Lower leg skin (tissue), 4 donors: ENCODE measurements at regions of chr1 and their contacts with region 1.

Region 1: DNA sequence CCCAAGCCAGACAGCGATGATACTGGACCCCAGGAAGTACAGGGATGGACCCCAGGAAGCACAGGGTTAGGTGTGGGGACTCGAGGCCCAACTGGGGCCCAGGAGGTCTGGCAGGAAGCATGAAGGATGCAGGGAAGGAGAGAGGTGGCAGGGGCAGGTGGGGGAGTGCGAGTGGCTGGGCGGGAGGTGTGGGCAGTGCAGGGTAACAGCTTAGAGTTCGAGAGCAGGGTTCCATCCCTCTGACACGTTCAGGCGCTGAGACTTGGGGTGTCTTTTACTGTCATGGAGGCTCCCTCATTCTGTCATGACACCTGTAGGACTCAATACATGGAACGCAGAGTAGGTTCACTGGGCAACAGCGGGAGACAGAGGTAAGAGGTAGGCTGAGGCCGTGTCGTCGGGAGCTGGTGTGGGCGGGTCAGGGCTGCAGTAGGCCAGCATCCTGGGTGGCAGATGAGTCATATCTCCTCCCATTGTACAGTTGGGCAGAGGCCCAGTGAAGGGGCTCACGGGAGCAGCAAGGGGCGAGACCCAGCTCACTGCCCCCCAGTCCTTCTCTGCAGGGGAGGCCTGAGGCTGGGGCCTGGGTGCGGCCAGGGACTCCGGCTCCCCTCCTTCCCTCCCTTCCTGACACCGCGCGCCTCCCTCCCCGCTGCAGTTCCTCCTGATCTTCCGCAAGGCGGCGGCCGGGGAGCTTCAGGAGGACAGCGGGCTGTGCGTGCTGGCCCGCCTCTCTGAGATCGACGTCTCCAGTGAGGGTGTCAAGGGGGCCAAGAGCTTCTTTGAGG is 11.6 kb upstream of the CTRC start:
- DNase-seq: no peak
- H3K4me3 ChIP-seq: no peak overlapping the region
- CTCF ChIP-seq: no peak
- POLR2A ChIP-seq: no peak

Region 2: GRCh38 chr1:15128520-15129313 is 298.0 kb before region 1 on chr1:
- intact Hi-C with region 1: loop called (anchors 10 kb)
- DNase-seq: peak; percentile 53 to 92
- H3K4me3 ChIP-seq: no peak overlapping the region
- CTCF ChIP-seq: peak in 1 of 3 donors; percentile 47
- POLR2A ChIP-seq: no peak

Region 3: DNA sequence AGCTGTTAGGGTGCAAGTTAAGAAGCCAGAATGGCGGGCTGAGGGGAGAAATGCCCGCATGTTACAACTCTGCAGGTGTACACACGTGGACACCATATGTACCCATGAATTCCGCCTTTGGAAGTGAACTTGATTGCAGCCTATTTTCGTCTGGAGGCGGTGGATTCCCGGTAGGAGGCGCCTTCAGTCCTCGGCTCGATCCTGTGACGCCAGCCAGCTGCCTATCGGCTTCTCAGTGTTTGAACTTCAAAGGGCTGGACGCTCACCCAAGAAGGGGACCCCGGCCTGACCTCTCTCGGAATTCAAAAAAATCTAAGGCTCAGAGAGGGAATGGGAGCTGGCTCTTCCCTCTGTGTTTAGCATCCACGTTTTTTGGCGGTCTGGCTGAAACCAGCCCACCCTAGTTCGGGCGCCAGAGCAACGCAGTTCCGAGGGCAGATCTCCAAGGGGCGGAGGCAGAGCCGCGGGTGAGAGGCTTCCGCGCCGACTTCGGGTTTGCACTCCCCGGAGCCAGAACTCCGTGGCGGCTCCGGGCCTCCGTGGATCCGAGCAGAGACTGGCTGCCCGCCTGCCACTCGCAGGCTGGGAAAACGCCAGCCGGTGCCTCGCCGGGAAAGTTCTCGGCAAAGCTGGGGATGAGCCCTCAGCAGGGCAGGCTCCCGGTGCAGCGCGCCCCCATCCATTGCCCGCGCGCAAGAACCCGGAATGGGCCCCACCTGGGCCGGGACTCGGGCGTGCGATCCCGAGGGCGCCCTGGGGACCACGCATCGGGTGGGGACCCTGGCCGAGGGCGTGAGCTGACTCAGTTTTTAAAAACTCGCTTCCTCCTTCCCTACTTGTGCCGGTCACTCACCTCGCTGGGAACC is 274.1 kb before region 1 on chr1:
- intact Hi-C with region 1: no loop called
- DNase-seq: peak; percentile 70 to 96
- H3K4me3 ChIP-seq: peak overlapping the region; percentile 36
- CTCF ChIP-seq: peak in 1 of 3 donors; percentile 26
- POLR2A ChIP-seq: no peak

Region 4: DNA sequence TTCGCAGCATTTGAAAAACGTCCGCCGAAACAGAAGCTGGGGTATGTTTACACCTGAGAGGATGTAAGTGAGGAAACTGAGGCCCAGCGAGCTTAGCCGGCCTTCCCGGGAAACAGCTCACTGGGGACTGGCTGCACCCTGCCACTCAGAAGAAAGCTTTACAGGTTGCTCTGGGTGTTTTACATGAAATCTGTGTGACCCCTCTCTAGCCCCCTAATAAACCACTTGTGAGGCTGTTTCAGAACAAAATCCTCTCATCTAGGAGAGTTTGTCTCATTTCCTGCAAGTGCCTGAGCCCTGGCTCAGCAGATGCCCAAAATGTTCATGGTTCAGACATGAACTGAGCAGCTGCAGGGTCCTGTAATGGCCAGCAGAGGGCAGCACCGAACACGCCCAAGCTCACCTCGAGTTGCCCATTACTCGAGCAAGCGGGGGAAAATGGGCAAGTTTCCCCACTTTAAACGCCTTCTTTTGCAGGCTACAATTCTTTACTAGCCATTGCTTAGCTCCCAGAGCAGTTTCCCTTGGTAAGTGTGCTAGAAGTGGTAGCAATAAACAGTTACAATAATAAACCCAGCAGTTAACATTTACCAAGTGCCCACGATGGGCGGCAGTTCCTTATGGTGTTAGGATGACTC is 103.2 kb before region 1 on chr1:
- intact Hi-C with region 1: loop called (anchors 2 kb)
- DNase-seq: peak; percentile 76 to 96
- H3K4me3 ChIP-seq: no peak overlapping the region
- CTCF ChIP-seq: peak in 1 of 3 donors; percentile 86
- POLR2A ChIP-seq: no peak

Region 5: GRCh38 chr1:15328351-15329103 is 98.2 kb before region 1 on chr1:
- intact Hi-C with region 1: loop called (anchors 2 kb)
- DNase-seq: peak in 1 of 2 donors; percentile 35
- H3K4me3 ChIP-seq: no peak overlapping the region
- CTCF ChIP-seq: no peak
- POLR2A ChIP-seq: no peak

Region 6: GRCh38 chr1:15384301-15384901 is 42.3 kb before region 1 on chr1:
- intact Hi-C with region 1: no loop called
- DNase-seq: no peak
- H3K4me3 ChIP-seq: no peak overlapping the region
- CTCF ChIP-seq: no peak
- POLR2A ChIP-seq: no peak